ENCODE measurements at regions of chr1 and their contacts with region 1.

Region 1: DNA sequence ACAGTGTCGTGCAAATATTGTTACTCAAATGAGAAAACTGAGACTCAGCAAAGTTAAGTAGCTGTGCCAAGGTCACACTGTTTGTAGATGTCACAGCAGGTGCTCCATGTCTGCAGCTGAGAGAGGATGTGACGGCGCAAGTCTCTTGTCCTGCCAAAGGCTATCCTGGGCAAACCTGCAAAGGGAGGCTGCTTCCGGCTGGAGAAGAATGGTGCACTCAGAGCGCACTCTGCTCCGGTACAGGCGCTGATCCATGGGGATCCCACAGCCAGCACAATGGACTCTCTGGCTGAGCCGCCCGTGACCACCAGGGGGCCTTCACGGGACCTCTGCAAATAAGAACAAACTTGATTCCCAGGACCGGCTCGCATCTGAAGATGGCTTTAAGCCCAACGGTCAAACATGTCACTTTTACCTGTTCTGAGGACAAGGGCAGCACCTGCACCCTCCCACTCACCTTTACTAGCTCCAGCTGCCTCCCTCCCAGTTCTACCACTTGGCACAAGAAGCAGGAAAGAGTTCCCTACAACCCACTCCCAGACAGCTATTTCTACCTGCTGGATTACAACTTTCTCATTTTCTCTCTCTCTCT is 21.9 kb downstream of the RD3 start:
- DNase-seq: peak; percentile 72 to 87 (median 83)
- ATAC-seq: peak; percentile 79 to 96 (median 93)
- H3K4me3 ChIP-seq: no peak overlapping the region
- H3K27ac ChIP-seq: peak overlapping the region in 1 of 12 donors; percentile 4
- H3K4me1 ChIP-seq: peaks cover 0 to 20% (median 9%) of the 10 kb centered on the region in 12 donors
- H3K27me3 ChIP-seq: no peaks in the 10 kb centered on the region
- CTCF ChIP-seq: peak; percentile 78 to 91 (median 82)
- POLR2A ChIP-seq: no peak

Region 2: DNA sequence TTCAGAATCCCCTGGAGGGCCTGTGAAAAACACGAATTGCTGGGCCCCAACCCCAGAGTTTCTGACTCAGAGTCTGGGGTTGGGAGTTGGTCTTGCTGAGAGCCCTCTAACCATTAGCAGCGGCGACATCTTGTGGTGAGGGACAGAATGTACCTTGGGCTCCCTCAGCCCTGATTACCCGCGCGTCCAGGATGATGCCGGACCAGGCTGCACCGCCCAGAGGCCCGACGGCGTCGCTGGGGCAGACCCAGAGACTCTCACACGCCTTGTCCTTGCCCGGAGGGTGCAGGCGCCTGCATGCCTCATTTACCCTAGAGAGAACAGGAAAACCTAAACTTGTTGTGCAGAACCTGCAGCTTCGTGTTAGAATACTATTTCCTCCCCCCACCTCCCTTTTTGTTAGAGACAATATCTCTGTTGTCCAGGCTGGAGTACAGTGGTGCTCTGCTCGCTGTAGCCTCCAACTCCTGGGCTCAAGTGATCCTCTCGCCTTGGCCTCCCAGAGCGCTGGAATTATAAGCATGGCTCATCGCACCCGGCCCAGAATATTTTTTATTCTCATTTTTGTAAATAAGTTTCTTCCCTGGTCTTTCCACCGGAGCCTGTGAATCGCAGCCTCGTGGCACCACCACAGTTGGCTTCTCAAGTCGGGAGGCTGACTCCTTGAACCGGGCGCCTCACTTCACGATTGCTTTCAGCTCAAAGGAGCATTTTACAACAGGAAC is 44.2 kb after region 1 on chr1:
- intact Hi-C with region 1: loop called in 8 of 10 experiments (anchors 1 to 5 kb)
- DNase-seq: peak; percentile 71 to 87 (median 81)
- ATAC-seq: peak; percentile 86 to 91 (median 88)
- H3K4me3 ChIP-seq: no peak overlapping the region
- H3K27ac ChIP-seq: no peak overlapping the region
- H3K4me1 ChIP-seq: peaks cover 0 to 17% (median 8%) of the 10 kb centered on the region in 12 donors
- H3K27me3 ChIP-seq: peaks cover 0 to 8% (median 0%) of the 10 kb centered on the region in 9 donors
- CTCF ChIP-seq: peak; percentile 64 to 86 (median 75)
- POLR2A ChIP-seq: no peak